Esophagus squamous epithelium (tissue), 5 donors: ENCODE measurements at regions of chr22 and their contacts with region 1.

Region 1: DNA sequence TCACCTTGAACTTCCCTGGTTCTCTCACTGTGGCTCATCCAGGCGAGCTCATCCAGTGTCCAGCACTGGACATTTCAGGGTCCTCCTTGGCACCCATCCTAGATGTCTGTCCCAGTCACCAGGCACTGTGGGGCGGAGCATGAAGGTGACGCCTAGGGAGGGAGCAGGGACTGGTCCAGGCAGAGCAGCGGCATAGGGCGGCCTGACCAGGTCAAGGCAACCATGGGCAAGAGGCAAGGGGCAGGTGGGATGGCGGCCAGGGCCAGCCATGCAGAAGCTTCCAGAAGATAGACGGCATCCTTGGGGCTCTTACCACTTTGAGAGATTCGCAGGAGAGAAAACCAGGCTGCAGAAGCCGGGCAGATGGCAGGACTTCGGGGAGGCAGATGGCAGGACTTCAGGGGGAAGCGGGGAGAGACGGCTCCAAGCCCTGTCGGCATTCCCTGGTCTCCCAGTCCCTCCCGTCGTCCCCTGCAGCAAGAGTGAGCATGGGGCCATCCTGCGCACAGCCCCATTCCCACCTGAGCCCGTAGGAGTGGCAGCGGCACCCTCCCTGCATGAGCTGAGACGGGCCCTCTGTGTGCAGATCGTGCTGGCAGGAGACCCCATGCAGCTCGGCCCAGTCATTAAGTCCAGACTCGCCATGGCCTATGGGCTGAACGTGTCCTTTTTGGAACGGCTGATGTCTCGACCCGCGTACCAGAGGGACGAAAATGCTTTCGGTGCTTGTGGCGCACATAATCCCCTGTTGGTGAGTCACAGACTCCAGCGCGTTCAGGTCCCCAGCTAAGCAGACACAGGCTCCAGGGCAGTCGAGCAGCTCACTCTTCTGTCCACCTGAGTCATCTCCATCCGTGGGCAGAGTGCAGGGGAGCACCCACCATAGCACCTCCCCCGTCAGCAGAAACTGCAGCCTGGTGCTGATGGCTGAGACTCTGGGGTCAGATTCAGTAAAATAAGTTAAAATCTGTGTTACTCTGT is 20.1 kb upstream of the PANX2 start:
- DNase-seq: no peak
- H3K4me3 ChIP-seq: no peak overlapping the region
- H3K27ac ChIP-seq: no peak overlapping the region
- H3K4me1 ChIP-seq: peaks cover 0 to 10% (median 0%) of the 10 kb centered on the region in 3 donors
- H3K27me3 ChIP-seq: peaks cover 0 to 17% (median 0%) of the 10 kb centered on the region in 4 donors
- CTCF ChIP-seq: no peak
- POLR2A ChIP-seq: no peak

Region 2: GRCh38 chr22:50209893-50210292 is 59.5 kb after region 1 on chr22:
- intact Hi-C with region 1: loop called (anchors 5 kb)
- DNase-seq: no peak
- H3K4me3 ChIP-seq: no peak overlapping the region
- H3K27ac ChIP-seq: no peak overlapping the region
- H3K4me1 ChIP-seq: peaks cover 0 to 47% (median 0%) of the 10 kb centered on the region in 3 donors
- H3K27me3 ChIP-seq: no peaks in the 10 kb centered on the region
- CTCF ChIP-seq: peak; percentile 75 to 89 (median 84)
- POLR2A ChIP-seq: no peak